H1 (cell line): ENCODE measurements at regions of chr22 and their contacts with region 1.

Region 1: DNA sequence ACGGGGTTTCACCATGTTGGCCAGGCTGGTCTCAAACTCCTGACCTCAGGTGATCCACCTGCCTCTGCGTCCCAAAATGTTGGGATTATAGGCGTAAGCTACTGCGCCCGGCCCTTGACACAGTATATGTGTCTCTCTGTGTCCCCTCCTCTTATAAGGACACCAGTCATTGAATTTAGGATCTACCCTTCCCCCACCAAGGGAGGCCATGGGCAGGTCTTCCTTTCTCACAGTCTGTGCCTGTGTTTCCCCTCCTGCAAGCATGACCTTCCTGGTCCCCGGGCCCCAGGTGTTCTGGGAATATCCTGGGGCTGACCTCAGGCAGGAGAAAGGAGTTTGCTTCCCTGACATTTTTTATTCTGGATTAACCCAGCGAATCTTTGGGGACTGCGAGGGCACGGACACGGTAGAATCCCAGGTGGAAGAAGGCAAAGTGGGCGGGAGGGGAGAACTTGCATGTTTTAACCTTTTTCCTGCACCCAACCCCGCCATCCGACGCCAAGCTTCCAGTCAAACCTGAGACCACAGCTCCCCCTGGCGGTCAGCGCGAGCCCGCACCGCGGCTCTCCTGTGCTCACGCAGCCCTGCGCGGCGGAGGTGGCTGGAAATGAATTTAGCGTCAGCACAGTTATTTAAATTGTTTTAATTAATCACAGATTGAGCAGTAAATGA is 42.1 kb upstream of the ISX start:
- DNase-seq: peak; percentile 63 to 99
- H3K4me3 ChIP-seq: peak overlapping the region in 2 of 4 experiments; percentile 29 to 38; a peak in 2 of 8 replicates
- H3K27ac ChIP-seq: no peak overlapping the region
- H3K4me1 ChIP-seq: no peaks in the 10 kb centered on the region; a peak in 2 of 7 replicates
- H3K27me3 ChIP-seq: peaks cover 0 to 4% (median 2%) of the 10 kb centered on the region in 4 experiments; a peak in 1 of 7 replicates
- CTCF ChIP-seq: peak; percentile 92 to 93 (median 93)
- EP300 ChIP-seq: no peak
- POLR2A ChIP-seq: no peak
- RAD21 ChIP-seq: peak; percentile 97 to 99

Region 2: GRCh38 chr22:34943830-34944229 is 80.0 kb before region 1 on chr22:
- CTCF ChIA-PET with region 1: interaction called, 10 read pairs
- POLR2A ChIA-PET with region 1: no interaction called
- DNase-seq: no peak
- H3K4me3 ChIP-seq: no peak overlapping the region
- H3K27ac ChIP-seq: no peak overlapping the region
- H3K4me1 ChIP-seq: no peaks in the 10 kb centered on the region
- H3K27me3 ChIP-seq: no peaks in the 10 kb centered on the region
- CTCF ChIP-seq: peak in 1 of 3 experiments; percentile 37; a peak in 1 of 4 replicates
- EP300 ChIP-seq: no peak
- POLR2A ChIP-seq: no peak
- RAD21 ChIP-seq: peak; percentile 6 to 33; a peak in 2 of 4 replicates

Region 3: GRCh38 chr22:34950489-34950888 is 73.3 kb before region 1 on chr22:
- CTCF ChIA-PET with region 1: interaction called, 10 read pairs
- POLR2A ChIA-PET with region 1: no interaction called
- DNase-seq: no peak
- H3K4me3 ChIP-seq: no peak overlapping the region
- H3K27ac ChIP-seq: no peak overlapping the region
- H3K4me1 ChIP-seq: peaks cover 0 to 13% (median 0%) of the 10 kb centered on the region in 4 experiments; a peak in 4 of 7 replicates
- H3K27me3 ChIP-seq: no peaks in the 10 kb centered on the region
- CTCF ChIP-seq: no peak
- EP300 ChIP-seq: no peak
- POLR2A ChIP-seq: no peak
- RAD21 ChIP-seq: no peak

Region 4: GRCh38 chr22:35051791-35052190 is 28.0 kb after region 1 on chr22:
- CTCF ChIA-PET with region 1: no interaction called
- POLR2A ChIA-PET with region 1: no interaction called
- DNase-seq: no peak
- H3K4me3 ChIP-seq: no peak overlapping the region
- H3K27ac ChIP-seq: no peak overlapping the region
- H3K4me1 ChIP-seq: no peaks in the 10 kb centered on the region
- H3K27me3 ChIP-seq: no peaks in the 10 kb centered on the region
- CTCF ChIP-seq: no peak
- EP300 ChIP-seq: no peak
- POLR2A ChIP-seq: no peak
- RAD21 ChIP-seq: no peak